ENCODE measurements at regions of chr1 and their contacts with region 1.

Region 1: DNA sequence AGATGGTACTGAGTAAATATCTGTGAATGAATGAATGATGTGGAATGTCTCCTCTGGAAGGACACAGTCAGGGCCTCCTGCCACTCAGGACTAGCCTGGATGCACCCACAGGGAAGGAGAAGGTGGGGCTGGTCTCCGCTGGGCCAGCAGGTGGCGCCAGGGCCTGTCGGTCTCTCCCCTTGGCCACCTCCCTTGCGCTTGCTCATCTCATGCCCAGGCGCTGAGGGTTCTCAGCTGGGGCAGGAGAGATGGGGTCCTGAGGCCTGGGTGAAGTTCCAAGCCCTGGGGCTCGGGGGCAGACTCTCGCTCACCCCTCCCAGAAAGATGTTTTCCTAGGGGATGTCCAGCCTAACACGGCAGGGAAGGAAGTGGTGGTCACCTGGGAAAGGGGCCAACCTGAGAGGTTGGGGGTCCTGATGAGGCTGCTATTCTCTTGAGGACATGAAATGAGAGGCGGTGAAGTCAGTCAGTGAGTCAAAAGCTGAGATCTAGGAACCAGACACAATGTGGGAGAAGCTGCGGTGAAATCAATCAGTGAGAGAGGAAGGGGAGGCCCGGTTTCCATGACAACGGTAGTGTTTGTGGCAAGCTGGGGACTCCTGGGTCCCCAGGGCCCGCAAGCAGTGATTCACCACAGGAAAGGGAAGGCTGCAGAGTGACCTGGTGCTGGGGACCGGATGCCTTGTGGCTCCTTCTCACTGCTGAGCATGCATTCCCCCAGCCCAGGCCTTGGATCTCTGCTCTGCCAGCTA is 14.6 kb upstream of the MEX3A start:
- DNase-seq: peak; percentile 86 to 88 (median 86)
- ATAC-seq: peak; percentile 100
- H3K4me3 ChIP-seq: no peak overlapping the region
- H3K27ac ChIP-seq: no peak overlapping the region
- H3K4me1 ChIP-seq: peaks cover 0 to 3% of the 10 kb centered on the region in 2 experiments; a peak in 2 of 5 replicates
- H3K27me3 ChIP-seq: no peaks in the 10 kb centered on the region
- CTCF ChIP-seq: peak; percentile 94 to 98 (median 95)
- EP300 ChIP-seq: no peak
- POLR2A ChIP-seq: no peak
- RAD21 ChIP-seq: peak; percentile 98 to 100

Region 2: GRCh38 chr1:156050416-156050815 is 46.4 kb before region 1 on chr1:
- CTCF ChIA-PET with region 1: no interaction called
- POLR2A ChIA-PET with region 1: no interaction called
- in situ Hi-C with region 1: no loop called
- intact Hi-C with region 1: no loop called
- DNase-seq: no peak
- ATAC-seq: no peak
- H3K4me3 ChIP-seq: no peak overlapping the region
- H3K27ac ChIP-seq: no peak overlapping the region
- H3K4me1 ChIP-seq: peaks cover 8 to 19% of the 10 kb centered on the region in 2 experiments; a peak in 4 of 5 replicates
- H3K27me3 ChIP-seq: no peaks in the 10 kb centered on the region
- CTCF ChIP-seq: no peak
- EP300 ChIP-seq: no peak
- POLR2A ChIP-seq: no peak
- RAD21 ChIP-seq: no peak

Region 3: GRCh38 chr1:156106624-156107488 is 10.0 kb after region 1 on chr1:
- CTCF ChIA-PET with region 1: interaction called, 3 read pairs
- POLR2A ChIA-PET with region 1: interaction called, 10 read pairs
- in situ Hi-C with region 1: no loop called
- intact Hi-C with region 1: no loop called
- DNase-seq: peak in 2 of 4 experiments; percentile 64 to 79
- ATAC-seq: peak; percentile 66
- H3K4me3 ChIP-seq: no peak overlapping the region
- H3K27ac ChIP-seq: peak overlapping the region; percentile 83
- H3K4me1 ChIP-seq: peaks cover 33 to 55% of the 10 kb centered on the region in 2 experiments
- H3K27me3 ChIP-seq: no peaks in the 10 kb centered on the region
- CTCF ChIP-seq: no peak
- EP300 ChIP-seq: peak; percentile 40; the same call in 1 of the 2 replicates
- POLR2A ChIP-seq: no peak
- RAD21 ChIP-seq: no peak

Region 4: DNA sequence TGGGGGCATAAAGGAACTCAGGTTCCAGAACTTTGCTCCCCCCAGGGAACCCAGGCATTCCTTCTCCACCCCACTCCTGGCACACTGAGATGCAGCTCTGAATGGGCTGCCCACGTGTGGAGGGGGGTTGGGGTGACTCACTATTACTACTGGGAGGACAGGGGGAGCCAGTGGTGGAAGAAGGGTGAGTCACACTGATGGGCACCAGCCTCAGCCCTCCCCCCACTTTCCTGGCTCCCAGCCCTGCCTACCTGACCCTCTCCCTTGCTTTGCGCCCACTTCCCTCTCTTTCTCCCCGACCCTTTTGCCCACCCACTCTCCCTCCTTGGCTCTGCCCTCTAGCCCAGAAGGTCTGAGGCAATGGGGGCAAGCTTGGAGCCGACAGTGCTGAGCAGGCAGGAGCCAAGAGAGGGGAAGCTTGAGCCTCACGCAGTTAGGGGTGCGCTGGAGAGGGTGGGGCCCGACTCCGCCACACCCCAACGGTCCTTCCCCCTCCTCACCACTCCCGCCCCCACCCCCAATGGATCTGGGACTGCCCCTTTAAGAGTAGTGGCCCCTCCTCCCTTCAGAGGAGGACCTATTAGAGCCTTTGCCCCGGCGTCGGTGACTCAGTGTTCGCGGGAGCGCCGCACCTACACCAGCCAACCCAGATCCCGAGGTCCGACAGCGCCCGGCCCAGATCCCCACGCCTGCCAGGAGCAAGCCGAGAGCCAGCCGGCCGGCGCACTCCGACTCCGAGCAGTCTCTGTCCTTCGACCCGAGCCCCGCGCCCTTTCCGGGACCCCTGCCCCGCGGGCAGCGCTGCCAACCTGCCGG is 17.5 kb after region 1 on chr1 and contains the start of gene LMNA:
- CTCF ChIA-PET with region 1: no interaction called
- POLR2A ChIA-PET with region 1: interaction called, 164 read pairs
- in situ Hi-C with region 1: no loop called
- intact Hi-C with region 1: no loop called
- DNase-seq: peak; percentile 90 to 94 (median 92)
- ATAC-seq: peak; percentile 91
- H3K4me3 ChIP-seq: peak within 1 kb of the TSS; percentile 73
- H3K27ac ChIP-seq: peak within 1 kb of the TSS; percentile 92
- H3K4me1 ChIP-seq: peaks cover 24 to 41% of the 10 kb centered on the region in 2 experiments
- H3K27me3 ChIP-seq: no peaks in the 10 kb centered on the region
- CTCF ChIP-seq: 0 out of 6 replicates have a peak, but pooled peaks of 1 of the 3 experiments have one; percentile 5
- EP300 ChIP-seq: 0 out of 2 replicates have a peak, but pooled peaks have one; percentile 25
- POLR2A ChIP-seq: peak; percentile 87
- RAD21 ChIP-seq: no peak
- polyA plus RNA-seq, gene LMNA: 1.00 to 4.5 TPM

Region 5: DNA sequence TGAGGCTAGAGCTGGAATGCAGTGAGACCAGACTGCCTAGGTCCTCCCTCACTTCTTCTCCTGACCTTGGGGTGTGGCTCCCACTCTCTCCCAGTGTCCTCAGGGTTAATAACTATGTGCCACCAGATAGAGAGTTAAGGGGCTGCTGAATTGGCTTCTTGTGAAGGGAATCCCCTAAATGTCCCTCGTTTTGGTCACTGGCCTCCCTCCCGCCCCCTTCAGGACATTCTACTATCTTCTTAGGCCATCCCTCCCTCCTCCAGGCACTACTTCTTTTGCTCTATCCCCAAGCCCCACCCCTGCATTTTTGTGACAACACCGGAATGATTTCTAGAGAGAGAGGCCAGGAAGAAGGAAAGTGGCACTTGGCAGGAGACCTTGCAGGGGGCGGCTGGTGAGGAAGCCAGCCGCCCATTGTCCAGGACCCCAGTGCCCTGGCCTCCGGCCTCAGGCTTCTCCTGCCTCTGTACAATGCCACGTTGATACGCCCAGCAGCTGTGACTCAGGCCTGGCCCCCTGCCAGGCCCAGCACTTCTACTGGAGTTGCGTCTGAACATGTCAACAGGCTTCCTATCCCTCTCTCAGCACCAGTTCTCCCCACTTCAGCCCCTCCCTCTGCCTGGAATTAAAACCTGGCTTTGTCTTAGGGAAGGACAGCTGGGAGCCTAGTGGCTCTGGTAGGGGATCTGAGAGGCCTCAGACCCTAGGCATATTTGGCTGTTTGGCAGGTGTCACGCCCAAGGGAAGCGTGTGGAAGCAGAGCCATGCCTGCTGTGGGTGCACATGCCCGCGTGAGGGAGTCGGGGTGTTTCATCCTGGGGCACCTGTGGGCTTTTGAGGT is 26.8 kb after region 1 on chr1:
- CTCF ChIA-PET with region 1: interaction called, 71 read pairs
- POLR2A ChIA-PET with region 1: interaction called, 164 read pairs
- in situ Hi-C with region 1: no loop called
- intact Hi-C with region 1: no loop called
- DNase-seq: peak; percentile 64 to 98 (median 70)
- ATAC-seq: peak; percentile 70
- H3K4me3 ChIP-seq: peak overlapping the region; percentile 31; the same call in 1 of the 2 replicates
- H3K27ac ChIP-seq: peak overlapping the region; percentile 99
- H3K4me1 ChIP-seq: peaks cover 86 to 89% of the 10 kb centered on the region in 2 experiments
- H3K27me3 ChIP-seq: no peaks in the 10 kb centered on the region
- CTCF ChIP-seq: peak in 2 of 3 experiments; percentile 43 to 64; a peak in 4 of 6 replicates
- EP300 ChIP-seq: peak; percentile 34; the same call in 1 of the 2 replicates
- POLR2A ChIP-seq: no peak
- RAD21 ChIP-seq: no peak

Region 6: GRCh38 chr1:156129706-156130581 is 33.1 kb after region 1 on chr1:
- CTCF ChIA-PET with region 1: interaction called, 71 read pairs
- POLR2A ChIA-PET with region 1: interaction called, 76 read pairs
- in situ Hi-C with region 1: loop called (anchors 5 kb)
- intact Hi-C with region 1: loop called (anchors 1 kb)
- DNase-seq: peak; percentile 72 to 87 (median 80)
- ATAC-seq: peak; percentile 75
- H3K4me3 ChIP-seq: no peak overlapping the region
- H3K27ac ChIP-seq: peak overlapping the region; percentile 76
- H3K4me1 ChIP-seq: peaks cover 51 to 53% of the 10 kb centered on the region in 2 experiments
- H3K27me3 ChIP-seq: no peaks in the 10 kb centered on the region
- CTCF ChIP-seq: peak; percentile 92 to 96 (median 94)
- EP300 ChIP-seq: no peak
- POLR2A ChIP-seq: no peak
- RAD21 ChIP-seq: peak; percentile 95 to 98

Region 7: GRCh38 chr1:156226116-156226538 is 129.3 kb after region 1 on chr1:
- CTCF ChIA-PET with region 1: interaction called, 7 read pairs
- POLR2A ChIA-PET with region 1: interaction called, 3 read pairs
- in situ Hi-C with region 1: loop called (anchors 5 kb)
- intact Hi-C with region 1: loop called (anchors 5 kb)
- DNase-seq: no peak
- ATAC-seq: no peak
- H3K4me3 ChIP-seq: no peak overlapping the region
- H3K27ac ChIP-seq: no peak overlapping the region
- H3K4me1 ChIP-seq: peaks cover 3 to 7% of the 10 kb centered on the region in 2 experiments; a peak in 3 of 5 replicates
- H3K27me3 ChIP-seq: no peaks in the 10 kb centered on the region
- CTCF ChIP-seq: no peak
- EP300 ChIP-seq: no peak
- POLR2A ChIP-seq: no peak
- RAD21 ChIP-seq: no peak

Region 8: DNA sequence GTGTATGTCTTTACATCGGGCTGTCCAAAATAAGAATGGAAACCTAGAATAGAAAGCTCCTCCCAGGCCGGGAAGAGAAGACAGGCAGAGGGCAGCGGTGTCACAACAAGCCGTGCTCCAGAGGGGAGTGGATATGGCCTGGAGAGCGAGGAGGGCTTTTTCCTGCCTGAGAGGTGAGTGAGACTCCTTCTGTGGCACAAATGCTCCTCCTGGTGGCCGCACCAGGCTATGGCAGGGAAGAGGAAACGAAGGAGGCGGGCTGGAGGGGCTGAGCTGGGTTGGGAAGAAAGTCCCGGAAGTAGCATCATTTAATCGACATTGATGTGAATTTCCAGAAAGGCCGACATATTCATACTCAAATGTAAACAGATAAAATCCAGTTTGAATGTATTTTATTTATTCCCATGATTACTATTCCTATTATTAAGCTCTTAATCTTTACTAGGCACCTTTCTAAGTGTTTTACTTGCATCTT is 349.0 kb after region 1 on chr1:
- CTCF ChIA-PET with region 1: no interaction called
- POLR2A ChIA-PET with region 1: interaction called, 3 read pairs
- in situ Hi-C with region 1: no loop called
- intact Hi-C with region 1: loop called (anchors 10 kb)
- DNase-seq: peak; percentile 79 to 86 (median 84)
- ATAC-seq: peak; percentile 96
- H3K4me3 ChIP-seq: no peak overlapping the region
- H3K27ac ChIP-seq: no peak overlapping the region
- H3K4me1 ChIP-seq: peaks cover under 1 to 5% of the 10 kb centered on the region in 2 experiments; a peak in 2 of 5 replicates
- H3K27me3 ChIP-seq: peaks cover 33 to 34% of the 10 kb centered on the region in 2 experiments
- CTCF ChIP-seq: peak; percentile 94 to 97 (median 96)
- EP300 ChIP-seq: no peak
- POLR2A ChIP-seq: no peak
- RAD21 ChIP-seq: peak; percentile 93 to 98